ENCODE measurements at regions of chr6 and their contacts with region 1.

Region 1: DNA sequence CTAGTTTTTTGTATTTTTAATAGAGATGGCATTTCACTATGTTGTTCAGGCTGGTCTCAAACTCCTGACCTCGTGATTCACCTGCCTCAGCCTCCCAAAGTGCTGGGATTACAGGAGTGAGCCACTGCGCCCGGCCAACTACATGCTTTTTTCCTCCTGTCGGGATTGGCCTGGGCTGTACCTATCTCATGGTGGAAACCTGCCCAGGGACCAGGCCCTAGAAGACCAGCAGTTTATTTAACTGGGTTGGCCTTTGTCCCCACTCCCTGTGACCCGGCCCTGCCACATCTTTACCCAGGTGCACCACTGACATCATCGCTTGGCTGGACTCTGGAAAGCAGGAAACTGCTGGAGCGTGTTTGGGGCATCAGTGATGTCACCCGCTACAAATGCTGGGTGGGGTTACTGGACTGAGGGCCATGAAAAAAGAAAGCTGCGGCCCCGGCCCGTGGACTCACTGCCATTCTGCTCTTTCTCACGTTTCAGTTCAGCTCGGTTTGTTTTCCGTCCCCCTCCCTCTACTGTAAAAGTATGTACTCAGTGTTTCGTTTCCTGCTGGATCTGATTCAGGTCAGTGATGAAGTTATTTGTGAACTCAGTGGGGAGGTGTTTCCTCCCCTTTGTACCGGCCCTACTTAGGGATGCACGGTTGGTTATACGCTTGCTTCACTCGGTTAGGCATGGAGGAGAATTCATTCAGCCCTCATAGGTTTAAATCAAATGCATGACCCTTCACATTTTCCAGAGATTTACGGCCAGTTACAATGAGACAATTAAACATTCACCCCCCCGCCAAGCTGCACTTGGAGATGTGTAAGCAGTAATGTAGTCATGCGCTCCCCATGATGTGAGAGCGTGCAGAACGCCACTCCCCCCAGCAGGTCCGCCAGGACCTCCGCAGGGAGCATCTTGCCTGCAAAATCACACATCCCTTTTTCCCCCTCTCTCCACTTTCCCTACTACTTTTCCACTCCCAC is 179.3 kb downstream of the MTHFD1L start:
- DNase-seq: no peak
- ATAC-seq: no peak
- H3K4me3 ChIP-seq: no peak overlapping the region
- H3K4me3 Mint-ChIP-seq: no peak overlapping the region
- H3K27ac ChIP-seq: no peak overlapping the region
- H3K27ac Mint-ChIP-seq: no peak overlapping the region
- H3K4me1 ChIP-seq: no peaks in the 10 kb centered on the region
- H3K4me1 Mint-ChIP-seq: no peaks in the 10 kb centered on the region
- H3K27me3 ChIP-seq: no peaks in the 10 kb centered on the region
- H3K27me3 Mint-ChIP-seq: no peaks in the 10 kb centered on the region

Region 2: DNA sequence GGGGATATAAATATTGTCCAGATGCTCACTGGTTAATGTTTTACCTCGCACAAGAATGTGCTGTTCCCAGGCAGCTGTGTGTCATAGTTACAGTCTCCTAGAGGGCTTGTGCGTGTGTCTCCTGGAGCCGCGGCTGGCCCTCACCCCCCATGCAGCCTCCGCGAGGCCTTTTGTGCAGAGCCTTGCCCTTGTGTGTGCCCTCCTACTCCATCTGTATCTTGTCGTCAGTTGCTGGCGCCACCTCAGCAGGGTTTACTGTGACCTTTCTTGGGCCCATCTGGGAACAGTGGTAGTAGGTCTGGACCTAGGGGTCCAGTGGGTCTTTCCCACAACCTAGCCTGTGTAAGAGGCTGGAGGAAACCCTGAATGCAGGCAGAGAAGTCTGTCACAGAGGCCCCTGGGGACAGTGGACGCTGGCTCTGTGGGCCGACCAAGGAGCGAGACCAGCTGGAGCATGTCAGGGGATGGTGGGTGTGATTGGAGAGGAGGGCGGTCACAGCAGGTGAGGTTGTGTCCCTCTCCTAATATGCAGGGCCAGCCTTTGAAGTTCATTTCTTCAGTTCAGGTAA is 866.7 kb before region 1 on chr6:
- CTCF ChIA-PET with region 1: no interaction called
- POLR2A ChIA-PET with region 1: no interaction called
- DNase-seq: no peak
- ATAC-seq: no peak
- H3K4me3 ChIP-seq: no peak overlapping the region
- H3K4me3 Mint-ChIP-seq: no peak overlapping the region
- H3K27ac ChIP-seq: no peak overlapping the region
- H3K27ac Mint-ChIP-seq: no peak overlapping the region
- H3K4me1 ChIP-seq: no peaks in the 10 kb centered on the region
- H3K4me1 Mint-ChIP-seq: no peaks in the 10 kb centered on the region
- H3K27me3 ChIP-seq: peaks cover 0 to 4% of the 10 kb centered on the region in 2 experiments
- H3K27me3 Mint-ChIP-seq: peaks cover 0 to 3% of the 10 kb centered on the region in 2 donors

Region 3: GRCh38 chr6:151082079-151082478 is 37.3 kb after region 1 on chr6:
- CTCF ChIA-PET with region 1: interaction called in 1 of 2 experiments, 13 read pairs
- POLR2A ChIA-PET with region 1: interaction called in 1 of 2 experiments, 6 read pairs
- DNase-seq: no peak
- ATAC-seq: no peak
- H3K4me3 ChIP-seq: no peak overlapping the region
- H3K4me3 Mint-ChIP-seq: no peak overlapping the region
- H3K27ac ChIP-seq: no peak overlapping the region
- H3K27ac Mint-ChIP-seq: no peak overlapping the region
- H3K4me1 ChIP-seq: no peaks in the 10 kb centered on the region
- H3K4me1 Mint-ChIP-seq: no peaks in the 10 kb centered on the region
- H3K27me3 ChIP-seq: no peaks in the 10 kb centered on the region
- H3K27me3 Mint-ChIP-seq: no peaks in the 10 kb centered on the region

Region 4: GRCh38 chr6:151357758-151358436 is 313.1 kb after region 1 on chr6:
- CTCF ChIA-PET with region 1: no interaction called
- POLR2A ChIA-PET with region 1: interaction called in 1 of 2 experiments, 13 read pairs
- DNase-seq: no peak
- ATAC-seq: no peak
- H3K4me3 ChIP-seq: no peak overlapping the region
- H3K4me3 Mint-ChIP-seq: no peak overlapping the region
- H3K27ac ChIP-seq: no peak overlapping the region
- H3K27ac Mint-ChIP-seq: peak overlapping the region in 1 of 2 donors; percentile 42
- H3K4me1 ChIP-seq: peaks cover 3 to 4% of the 10 kb centered on the region in 2 experiments
- H3K4me1 Mint-ChIP-seq: peaks cover 10 to 14% (median 12%) of the 10 kb centered on the region in 3 donors
- H3K27me3 ChIP-seq: no peaks in the 10 kb centered on the region
- H3K27me3 Mint-ChIP-seq: no peaks in the 10 kb centered on the region